CD8-positive, alpha-beta memory T cell (primary cell): ENCODE measurements at regions of chr14 and their contacts with region 1.

Region 1: GRCh38 chr14:99627510-99628381 is 17.2 kb upstream of the HHIPL1 start:
- DNase-seq: no peak
- H3K4me3 ChIP-seq: no peak overlapping the region
- H3K4me3 Mint-ChIP-seq: no peak overlapping the region
- H3K27ac ChIP-seq: no peak overlapping the region
- H3K27ac Mint-ChIP-seq: peak overlapping the region in 2 of 8 donors; percentile 35 to 56
- H3K4me1 ChIP-seq: peaks cover 4% of the 10 kb centered on the region
- H3K4me1 Mint-ChIP-seq: peaks cover 4 to 10% (median 5%) of the 10 kb centered on the region in 3 donors
- H3K27me3 ChIP-seq: no peaks in the 10 kb centered on the region
- H3K27me3 Mint-ChIP-seq: peaks cover 24 to 52% of the 10 kb centered on the region in 2 donors

Region 2: GRCh38 chr14:99579903-99580570 is 47.7 kb before region 1 on chr14:
- CTCF ChIA-PET with region 1: interaction called, 4 read pairs
- POLR2A ChIA-PET with region 1: interaction called, 11 read pairs
- DNase-seq: no peak
- H3K4me3 ChIP-seq: no peak overlapping the region
- H3K4me3 Mint-ChIP-seq: no peak overlapping the region
- H3K27ac ChIP-seq: no peak overlapping the region
- H3K27ac Mint-ChIP-seq: no peak overlapping the region
- H3K4me1 ChIP-seq: no peaks in the 10 kb centered on the region
- H3K4me1 Mint-ChIP-seq: peaks cover 0 to 19% (median 4%) of the 10 kb centered on the region in 3 donors
- H3K27me3 ChIP-seq: no peaks in the 10 kb centered on the region
- H3K27me3 Mint-ChIP-seq: peaks cover 0 to 3% of the 10 kb centered on the region in 2 donors